ENCODE measurements at regions of chr7 and their contacts with region 1.

Region 1: DNA sequence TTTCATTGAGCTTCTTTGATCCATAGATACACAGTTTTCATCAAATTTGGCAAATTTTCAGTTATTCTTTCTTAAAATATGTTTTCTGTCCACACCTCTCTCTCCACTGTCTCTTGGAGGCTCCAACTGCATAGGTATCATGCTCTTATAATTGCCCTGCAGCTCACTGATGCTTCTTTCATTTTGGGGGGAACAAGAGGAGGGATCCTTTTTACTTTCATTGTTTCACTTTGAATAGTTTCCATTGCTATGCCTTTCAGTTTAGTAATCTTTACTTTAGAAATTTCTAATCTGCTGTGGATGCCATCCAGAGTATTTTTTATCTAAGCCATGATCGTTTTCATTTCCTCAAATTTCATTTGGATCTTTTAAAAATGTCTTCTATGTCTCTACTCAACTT is 32.9 kb downstream of the KBTBD2 start:
- DNase-seq: no peak
- ATAC-seq: no peak
- H3K4me3 ChIP-seq: no peak overlapping the region
- H3K27ac ChIP-seq: no peak overlapping the region
- H3K4me1 ChIP-seq: no peaks in the 10 kb centered on the region
- H3K27me3 ChIP-seq: peaks cover 6% of the 10 kb centered on the region; the same call in 1 of the 2 replicates
- CTCF ChIP-seq: no peak
- POLR2A ChIP-seq: no peak
- RAD21 ChIP-seq: no peak

Region 2: GRCh38 chr7:32846701-32847100 is 11.9 kb before region 1 on chr7:
- CTCF ChIA-PET with region 1: interaction called, 12 read pairs
- POLR2A ChIA-PET with region 1: no interaction called
- RAD21 ChIA-PET with region 1: no interaction called
- intact Hi-C with region 1: no loop called
- DNase-seq: peak; percentile 82
- ATAC-seq: peak; percentile 100
- H3K4me3 ChIP-seq: peak overlapping the region in 1 of 2 experiments; percentile 16; a peak in 1 of 4 replicates
- H3K27ac ChIP-seq: no peak overlapping the region
- H3K4me1 ChIP-seq: peaks cover 0 to 6% of the 10 kb centered on the region in 2 experiments; a peak in 1 of 4 replicates
- H3K27me3 ChIP-seq: no peaks in the 10 kb centered on the region
- CTCF ChIP-seq: peak; percentile 95 to 97 (median 95)
- POLR2A ChIP-seq: no peak
- RAD21 ChIP-seq: peak; percentile 76

Region 3: GRCh38 chr7:32942786-32943653 is 84.4 kb after region 1 on chr7:
- CTCF ChIA-PET with region 1: no interaction called
- POLR2A ChIA-PET with region 1: no interaction called
- RAD21 ChIA-PET with region 1: no interaction called
- intact Hi-C with region 1: no loop called
- DNase-seq: peak; percentile 50
- ATAC-seq: peak; percentile 89
- H3K4me3 ChIP-seq: peak overlapping the region; percentile 79 to 86
- H3K27ac ChIP-seq: peak overlapping the region; percentile 96
- H3K4me1 ChIP-seq: peaks cover 8 to 18% of the 10 kb centered on the region in 2 experiments
- H3K27me3 ChIP-seq: no peaks in the 10 kb centered on the region
- CTCF ChIP-seq: peak; percentile 33 to 40 (median 40); a peak in 5 of 6 replicates
- POLR2A ChIP-seq: peak; percentile 17
- RAD21 ChIP-seq: peak; percentile 58

Measured in HCT116 (cell line).